ENCODE measurements at regions of chr18 and their contacts with region 1.

Region 1: GRCh38 chr18:46281185-46282176 is 177.3 kb downstream of the HAUS1 start:
- DNase-seq: peak; percentile 83
- H3K4me3 ChIP-seq: no peak overlapping the region
- H3K27ac ChIP-seq: peak overlapping the region in 1 of 2 donors; percentile 33
- H3K4me1 ChIP-seq: peaks cover 16% of the 10 kb centered on the region
- H3K27me3 ChIP-seq: no peaks in the 10 kb centered on the region
- CTCF ChIP-seq: peak; percentile 66 to 82 (median 73)
- POLR2A ChIP-seq: no peak

Region 2: DNA sequence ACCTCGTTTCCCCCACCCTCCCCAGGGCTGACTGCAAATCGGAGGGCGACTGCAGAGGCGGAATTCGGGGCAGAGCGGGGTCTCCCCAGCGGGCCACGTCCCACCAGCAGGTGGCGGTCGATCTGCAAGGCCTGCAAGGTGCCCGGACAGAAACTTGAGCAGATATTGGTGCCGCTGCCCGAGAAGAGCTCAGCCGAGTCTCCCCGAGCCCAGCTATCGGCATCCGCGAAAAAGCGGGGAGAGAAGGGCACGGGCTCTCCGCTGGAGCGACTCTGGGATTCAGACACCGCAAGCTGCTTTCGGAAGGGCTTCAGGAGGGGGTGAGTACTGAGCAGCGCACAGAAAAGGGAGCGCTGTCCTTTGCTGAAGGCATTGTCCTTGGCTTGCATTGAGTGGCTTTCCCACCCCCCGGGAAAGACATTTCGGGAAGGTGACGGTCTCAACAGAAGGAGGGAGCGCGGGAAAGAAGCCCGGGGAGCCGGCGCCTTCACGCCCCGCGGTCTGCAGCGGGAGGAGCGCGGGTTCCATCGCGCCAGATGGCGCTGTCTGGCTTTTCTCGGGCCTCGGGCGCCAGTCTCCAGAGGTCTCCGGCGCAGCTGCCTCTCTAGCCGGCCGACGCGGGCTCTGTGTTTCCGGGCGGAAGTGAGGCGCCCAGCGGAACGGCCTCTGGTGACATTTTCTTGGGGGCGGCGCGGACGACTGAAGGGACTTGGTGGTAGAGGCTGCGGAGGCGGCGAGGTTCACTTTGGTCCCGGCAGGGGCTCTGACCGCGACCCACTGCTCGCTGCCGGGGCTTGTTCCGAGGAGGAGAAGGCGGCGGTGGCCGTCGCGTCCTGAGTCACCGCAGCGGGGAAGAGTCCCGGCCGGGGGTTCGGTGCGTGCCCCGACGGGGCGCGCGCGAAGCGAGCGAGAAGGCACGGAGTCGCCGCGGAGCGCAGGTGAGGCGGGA is 107.8 kb before region 1 on chr18:
- intact Hi-C with region 1: loop called (anchors 10 kb)
- DNase-seq: peak; percentile 96
- H3K4me3 ChIP-seq: peak overlapping the region; percentile 78 to 99
- H3K27ac ChIP-seq: peak overlapping the region; percentile 75 to 92
- H3K4me1 ChIP-seq: no peaks in the 10 kb centered on the region
- H3K27me3 ChIP-seq: no peaks in the 10 kb centered on the region
- CTCF ChIP-seq: peak; percentile 81 to 87 (median 82)
- POLR2A ChIP-seq: no peak

Region 3: GRCh38 chr18:46411867-46412690 is 130.6 kb after region 1 on chr18:
- intact Hi-C with region 1: no loop called
- DNase-seq: peak; percentile 50
- H3K4me3 ChIP-seq: no peak overlapping the region
- H3K27ac ChIP-seq: no peak overlapping the region
- H3K4me1 ChIP-seq: peaks cover 19% of the 10 kb centered on the region
- H3K27me3 ChIP-seq: no peaks in the 10 kb centered on the region
- CTCF ChIP-seq: no peak
- POLR2A ChIP-seq: no peak

Region 4: GRCh38 chr18:46474487-46475389 is 193.3 kb after region 1 on chr18:
- intact Hi-C with region 1: loop called (anchors 10 kb)
- DNase-seq: no peak
- H3K4me3 ChIP-seq: no peak overlapping the region
- H3K27ac ChIP-seq: no peak overlapping the region
- H3K4me1 ChIP-seq: no peaks in the 10 kb centered on the region
- H3K27me3 ChIP-seq: no peaks in the 10 kb centered on the region
- CTCF ChIP-seq: no peak
- POLR2A ChIP-seq: no peak

Region 5: GRCh38 chr18:46657115-46657955 is 375.9 kb after region 1 on chr18 and contains the start of gene LOXHD1:
- intact Hi-C with region 1: loop called (anchors 5 kb)
- DNase-seq: no peak
- H3K4me3 ChIP-seq: peak within 1 kb of the TSS in 1 of 2 donors; percentile 15
- H3K27ac ChIP-seq: no peak within 1 kb of the TSS
- H3K4me1 ChIP-seq: no peaks in the 10 kb centered on the region
- H3K27me3 ChIP-seq: no peaks in the 10 kb centered on the region
- CTCF ChIP-seq: no peak
- POLR2A ChIP-seq: no peak
- total RNA-seq, gene LOXHD1: 11.3 to 29.6 TPM